GM23248 (cell line): ENCODE measurements at regions of chr9 and their contacts with region 1.

Region 1: GRCh38 chr9:38392235-38393127 is at the start of gene ALDH1B1:
- DNase-seq: peak; percentile 97
- H3K4me3 ChIP-seq: peak within 1 kb of the TSS; percentile 86
- H3K27ac ChIP-seq: peak within 1 kb of the TSS; percentile 29
- H3K4me1 ChIP-seq: peaks cover 33% of the 10 kb centered on the region
- H3K27me3 ChIP-seq: no peaks in the 10 kb centered on the region
- total RNA-seq, gene ALDH1B1: 25.7 and 26.9 TPM in 2 replicates

Region 2: DNA sequence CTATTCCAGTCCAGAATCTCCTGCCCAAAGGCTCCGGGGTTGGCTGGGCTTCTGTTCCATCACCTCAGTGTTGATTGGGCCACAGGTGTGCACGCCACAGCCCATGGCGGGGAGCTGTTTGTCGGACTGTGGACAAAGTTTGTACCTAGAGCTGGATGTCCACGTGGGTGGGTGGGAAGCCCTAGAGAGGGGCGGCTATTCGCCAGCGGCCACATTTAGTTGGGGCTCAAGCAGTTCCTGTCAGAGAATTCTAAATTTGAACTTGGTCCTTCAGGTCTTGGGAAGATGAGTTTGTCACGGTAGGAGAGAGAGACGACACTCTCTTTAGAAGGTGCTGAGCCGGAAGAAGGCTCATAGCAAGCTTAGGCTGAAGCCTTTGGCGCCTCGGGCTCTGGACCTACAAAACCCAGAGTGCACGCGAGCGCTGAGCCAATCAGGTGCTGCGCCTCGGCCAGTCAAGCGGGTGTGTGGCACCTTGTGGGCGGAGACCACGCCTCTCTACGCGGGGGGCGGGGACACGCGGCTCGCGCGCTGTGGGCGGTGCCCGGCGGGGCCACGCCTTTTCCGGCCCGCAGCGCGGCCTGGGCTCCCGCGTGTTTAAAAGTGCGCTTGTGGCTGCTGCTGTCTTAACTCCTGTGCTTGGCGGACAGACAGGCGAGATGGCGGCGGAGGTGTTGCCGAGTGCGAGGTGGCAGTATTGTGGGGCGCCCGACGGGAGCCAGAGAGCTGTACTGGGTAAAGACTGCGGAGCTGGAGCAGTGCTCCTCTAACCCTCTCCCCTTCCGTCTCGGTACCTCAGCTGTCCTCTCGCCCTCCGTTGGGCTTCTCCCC is 906.9 kb before region 1 on chr9 and contains the start of gene POLR1E:
- in situ Hi-C with region 1: loop called (anchors 25 kb)
- DNase-seq: peak; percentile 98
- H3K4me3 ChIP-seq: peak within 1 kb of the TSS; percentile 86
- H3K27ac ChIP-seq: peak within 1 kb of the TSS; percentile 95
- H3K4me1 ChIP-seq: peaks cover 23% of the 10 kb centered on the region
- H3K27me3 ChIP-seq: no peaks in the 10 kb centered on the region
- total RNA-seq, gene POLR1E: 27.5 and 27.8 TPM in 2 replicates

Region 3: GRCh38 chr9:38172585-38172984 is 219.9 kb before region 1 on chr9:
- in situ Hi-C with region 1: no loop called
- DNase-seq: no peak
- H3K4me3 ChIP-seq: no peak overlapping the region
- H3K27ac ChIP-seq: no peak overlapping the region
- H3K4me1 ChIP-seq: no peaks in the 10 kb centered on the region
- H3K27me3 ChIP-seq: peaks cover 10% of the 10 kb centered on the region; the same call in 1 of the 2 replicates

Region 4: DNA sequence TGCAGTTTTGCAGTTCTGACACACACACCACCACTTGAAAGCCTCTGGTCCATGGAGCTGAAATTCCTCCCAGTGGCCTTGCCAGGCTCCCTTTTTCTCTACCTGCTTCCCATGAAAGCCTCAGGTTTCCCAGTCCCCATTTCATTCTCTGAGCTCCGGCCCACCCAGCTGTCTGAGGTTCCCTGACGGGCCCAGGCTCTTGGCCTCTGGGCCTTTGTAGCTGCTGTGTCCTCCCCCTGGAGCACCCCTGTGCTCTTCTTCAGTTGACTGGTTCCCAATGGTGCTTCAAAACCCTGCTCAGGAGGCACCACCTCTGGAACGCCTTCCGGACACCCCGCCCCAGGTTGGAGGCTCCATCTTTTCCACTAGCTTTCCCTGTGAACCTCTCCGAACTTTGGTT is 167.5 kb before region 1 on chr9:
- in situ Hi-C with region 1: no loop called
- DNase-seq: no peak
- H3K4me3 ChIP-seq: no peak overlapping the region
- H3K27ac ChIP-seq: no peak overlapping the region
- H3K4me1 ChIP-seq: peaks cover 8% of the 10 kb centered on the region; the same call in 1 of the 2 replicates
- H3K27me3 ChIP-seq: peaks cover 20% of the 10 kb centered on the region; the same call in 1 of the 2 replicates